GM13977 (cell line): ENCODE measurements at regions of chr1 and their contacts with region 1.

Region 1: DNA sequence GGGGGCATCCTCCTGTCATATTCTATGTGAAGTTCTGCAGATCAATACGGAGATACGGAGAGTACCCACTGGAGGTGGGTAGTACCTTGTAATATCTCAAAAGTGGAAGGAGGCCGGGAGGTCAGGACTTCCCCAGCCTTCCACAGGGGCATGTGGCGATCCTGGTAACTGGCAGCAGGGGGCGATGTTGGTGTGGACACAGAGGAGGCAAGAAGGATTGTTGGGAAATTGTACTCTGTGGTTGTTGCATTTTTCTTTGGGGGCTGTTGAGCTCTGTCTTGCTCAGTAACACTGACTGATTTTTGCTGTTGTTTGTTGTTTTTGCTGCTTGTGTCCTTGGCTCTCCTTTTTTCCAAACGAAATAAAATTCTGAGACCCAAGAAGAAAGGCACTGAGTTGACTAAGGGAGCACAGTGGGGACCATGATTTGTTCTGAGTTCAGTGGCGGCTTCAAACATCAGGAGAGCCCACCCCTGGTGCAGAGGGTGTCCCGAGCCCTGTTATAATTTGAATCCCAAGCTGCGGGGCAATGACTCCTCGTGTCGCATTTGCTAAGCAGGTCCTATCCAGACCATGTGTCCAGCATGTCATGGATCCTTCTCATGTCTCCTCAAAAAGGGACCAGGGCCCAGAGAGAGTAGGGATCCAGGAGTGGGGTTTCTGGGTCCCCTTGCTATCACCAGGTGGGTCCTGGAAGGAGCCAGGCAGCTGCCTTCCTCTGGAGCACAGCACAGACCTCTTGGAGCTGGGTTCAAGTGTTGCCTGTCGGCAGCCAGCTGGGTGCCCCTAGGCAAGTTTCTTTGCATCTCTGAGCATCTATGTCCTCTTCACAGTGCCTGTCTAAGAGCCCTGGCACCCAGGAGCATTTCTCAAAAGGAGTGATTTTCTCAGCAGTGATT is 22.8 kb downstream of the LHX4 start:
- DNase-seq: peak; percentile 85
- CTCF ChIP-seq: peak; percentile 92

Region 2: DNA sequence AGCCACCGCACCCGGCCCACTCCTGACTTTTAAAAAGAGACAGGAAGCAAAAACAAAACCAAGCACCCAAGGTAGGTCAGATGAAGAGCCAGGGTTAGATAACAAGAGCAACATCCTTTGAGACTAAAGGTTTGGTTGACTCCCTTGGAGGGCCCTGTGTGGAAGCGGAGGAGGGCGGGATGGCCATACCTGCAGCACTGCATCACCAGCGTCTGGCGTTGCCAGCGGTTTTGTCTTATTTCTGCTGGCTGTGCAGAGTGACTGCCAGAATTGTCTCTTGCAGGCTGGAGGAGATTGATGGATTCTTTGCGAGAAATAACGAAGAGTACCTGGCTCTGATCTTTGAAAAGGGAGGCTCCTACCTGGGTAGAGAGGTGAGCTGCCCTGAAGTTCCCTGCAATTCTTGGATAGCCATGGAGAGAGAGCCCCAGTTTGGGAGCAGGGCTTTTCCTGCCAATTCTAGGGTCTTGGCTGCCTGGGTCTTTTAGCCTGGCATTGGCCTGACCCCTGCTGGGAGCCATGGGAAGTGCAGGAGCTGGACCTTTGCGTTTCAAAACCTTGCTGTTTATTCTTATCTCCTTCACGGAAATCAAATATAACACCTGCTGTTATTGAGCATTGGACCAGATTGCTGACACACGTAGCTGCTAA is 74.3 kb before region 1 on chr1:
- in situ Hi-C with region 1: no loop called
- DNase-seq: peak; percentile 86
- CTCF ChIP-seq: peak; percentile 90

Region 3: DNA sequence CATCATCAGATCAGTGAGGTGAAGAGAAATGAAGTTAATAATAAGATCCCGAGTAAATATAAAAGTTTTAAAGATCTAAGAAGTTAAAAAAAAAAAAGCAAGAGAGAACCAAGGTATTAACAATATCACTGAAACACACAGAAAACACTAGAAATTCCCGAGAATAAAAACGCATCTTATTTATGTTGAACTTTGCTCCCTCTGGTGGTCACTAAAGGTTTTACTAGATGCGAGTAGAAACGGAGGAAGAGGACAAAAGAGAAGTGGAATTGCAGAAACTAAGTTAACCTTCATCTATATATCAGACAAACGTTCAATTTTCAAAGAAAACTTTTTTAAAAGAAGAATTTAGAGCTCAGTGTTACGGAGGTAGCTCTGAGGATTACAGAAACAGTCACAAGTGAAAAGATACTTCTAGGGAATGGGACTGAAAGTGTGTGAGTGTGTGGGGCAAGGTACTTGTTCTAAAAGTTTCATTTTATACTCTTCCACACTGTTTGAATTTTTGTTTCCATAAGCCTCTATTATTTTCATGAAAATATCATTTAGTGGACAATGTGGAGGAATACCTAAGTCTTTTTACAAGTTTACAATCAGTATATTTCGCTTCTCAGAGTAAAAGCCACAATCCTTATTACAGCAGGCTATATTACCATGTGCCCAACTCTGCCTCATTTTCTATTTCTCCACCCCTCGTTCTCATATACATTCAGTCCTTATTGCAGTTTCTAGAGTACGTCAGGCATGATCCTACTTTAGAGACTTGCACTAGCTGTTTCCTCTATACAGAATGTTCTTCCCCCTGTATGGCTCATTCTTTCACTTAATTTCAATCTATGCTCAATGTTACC is 229.8 kb after region 1 on chr1:
- in situ Hi-C with region 1: loop called (anchors 10 kb)
- DNase-seq: peak; percentile 38
- CTCF ChIP-seq: peak; percentile 67